Activated CD8-positive, alpha-beta memory T cell treated with anti-CD3 and anti-CD28 coated beads, Interleukin-2, amount 10 ng/mL, durations not matched to agents 7 days and 5 days (primary cell): ENCODE measurements at regions of chr19 and their contacts with region 1.

Region 1: DNA sequence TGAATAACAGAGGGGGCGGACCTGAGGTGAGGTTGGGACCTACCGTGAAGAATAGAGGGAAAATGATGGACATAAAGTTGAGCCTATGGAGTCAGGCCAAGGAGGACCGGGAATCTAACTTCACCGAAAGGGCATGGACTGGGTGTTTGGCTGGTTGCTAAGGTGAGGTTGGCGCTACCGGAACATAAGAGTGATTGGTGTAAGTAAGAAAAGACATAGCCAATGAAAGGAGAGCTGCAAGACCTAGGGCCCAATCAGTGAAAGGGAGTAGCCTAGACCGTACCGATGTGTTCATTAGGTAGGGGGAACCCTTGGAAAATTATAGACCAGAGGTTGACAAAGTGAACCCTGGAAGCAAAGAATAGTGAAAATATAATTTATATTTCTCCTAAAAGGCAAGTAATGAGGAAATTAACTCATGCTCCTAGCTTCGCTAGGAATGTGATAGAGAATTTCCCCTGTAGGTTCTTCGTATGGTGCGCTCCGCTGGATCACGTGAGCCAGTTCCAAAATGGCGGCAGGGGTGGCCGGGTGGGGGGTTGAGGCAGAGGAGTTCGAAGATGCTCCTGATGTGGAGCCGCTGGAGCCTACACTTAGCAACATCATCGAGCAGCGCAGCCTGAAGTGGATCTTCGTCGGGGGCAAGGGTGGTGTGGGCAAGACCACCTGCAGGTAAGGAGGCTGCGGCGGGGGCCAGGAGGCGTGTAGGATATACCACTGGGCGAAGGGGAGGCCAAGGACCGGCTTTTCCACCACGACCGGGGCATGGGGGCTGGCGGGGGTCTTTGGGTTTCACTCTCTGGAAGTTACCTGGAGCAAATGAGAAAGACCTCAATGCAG is at the start of gene GET3:
- DNase-seq: peak; percentile 88
- ATAC-seq: peak; percentile 86
- H3K4me3 Mint-ChIP-seq: peak within 1 kb of the TSS; percentile 99
- H3K27ac Mint-ChIP-seq: peak within 1 kb of the TSS; percentile 94
- H3K4me1 Mint-ChIP-seq: peaks cover 43% of the 10 kb centered on the region
- H3K27me3 Mint-ChIP-seq: no peaks in the 10 kb centered on the region
- total RNA-seq, gene GET3: 68.6 to 84.1 TPM

Region 2: DNA sequence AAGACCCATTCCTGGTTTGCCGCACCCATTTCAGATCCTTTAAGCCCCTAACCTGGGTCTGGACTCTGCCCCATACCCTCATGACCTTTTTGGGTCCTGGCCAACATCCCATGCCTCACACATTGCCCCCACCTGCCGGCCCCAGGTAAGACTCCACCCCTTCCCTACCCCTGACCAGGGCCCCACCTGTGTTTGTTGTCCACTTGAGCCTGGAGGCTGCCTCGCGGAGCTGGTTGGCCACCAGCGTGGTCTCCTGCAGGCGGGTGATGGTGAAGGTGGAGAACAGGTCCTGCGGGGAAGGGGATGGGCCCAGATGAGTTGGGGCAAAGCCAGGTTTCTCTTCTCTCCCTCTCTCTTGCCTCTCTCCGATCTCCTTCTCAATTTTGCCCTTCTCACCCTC is 90.2 kb before region 1 on chr19:
- CTCF ChIA-PET with region 1: no interaction called
- DNase-seq: no peak
- ATAC-seq: no peak
- H3K4me3 Mint-ChIP-seq: no peak overlapping the region
- H3K27ac Mint-ChIP-seq: no peak overlapping the region
- H3K4me1 Mint-ChIP-seq: peaks cover 2% of the 10 kb centered on the region
- H3K27me3 Mint-ChIP-seq: no peaks in the 10 kb centered on the region

Region 3: GRCh38 chr19:12696366-12697335 is 40.6 kb before region 1 on chr19 and contains the start of gene FBXW9:
- CTCF ChIA-PET with region 1: interaction called, 15 read pairs
- DNase-seq: peak; percentile 99
- ATAC-seq: peak; percentile 90
- H3K4me3 Mint-ChIP-seq: peak within 1 kb of the TSS; percentile 83
- H3K27ac Mint-ChIP-seq: peak within 1 kb of the TSS; percentile 98
- H3K4me1 Mint-ChIP-seq: peaks cover 26% of the 10 kb centered on the region
- H3K27me3 Mint-ChIP-seq: no peaks in the 10 kb centered on the region
- total RNA-seq, gene FBXW9: 5.2 to 6.3 TPM

Region 4: GRCh38 chr19:12716861-12717260 is 20.4 kb before region 1 on chr19:
- CTCF ChIA-PET with region 1: interaction called, 58 read pairs
- DNase-seq: peak; percentile 60
- ATAC-seq: peak; percentile 60
- H3K4me3 Mint-ChIP-seq: no peak overlapping the region
- H3K27ac Mint-ChIP-seq: no peak overlapping the region
- H3K4me1 Mint-ChIP-seq: peaks cover 28% of the 10 kb centered on the region
- H3K27me3 Mint-ChIP-seq: no peaks in the 10 kb centered on the region

Region 5: DNA sequence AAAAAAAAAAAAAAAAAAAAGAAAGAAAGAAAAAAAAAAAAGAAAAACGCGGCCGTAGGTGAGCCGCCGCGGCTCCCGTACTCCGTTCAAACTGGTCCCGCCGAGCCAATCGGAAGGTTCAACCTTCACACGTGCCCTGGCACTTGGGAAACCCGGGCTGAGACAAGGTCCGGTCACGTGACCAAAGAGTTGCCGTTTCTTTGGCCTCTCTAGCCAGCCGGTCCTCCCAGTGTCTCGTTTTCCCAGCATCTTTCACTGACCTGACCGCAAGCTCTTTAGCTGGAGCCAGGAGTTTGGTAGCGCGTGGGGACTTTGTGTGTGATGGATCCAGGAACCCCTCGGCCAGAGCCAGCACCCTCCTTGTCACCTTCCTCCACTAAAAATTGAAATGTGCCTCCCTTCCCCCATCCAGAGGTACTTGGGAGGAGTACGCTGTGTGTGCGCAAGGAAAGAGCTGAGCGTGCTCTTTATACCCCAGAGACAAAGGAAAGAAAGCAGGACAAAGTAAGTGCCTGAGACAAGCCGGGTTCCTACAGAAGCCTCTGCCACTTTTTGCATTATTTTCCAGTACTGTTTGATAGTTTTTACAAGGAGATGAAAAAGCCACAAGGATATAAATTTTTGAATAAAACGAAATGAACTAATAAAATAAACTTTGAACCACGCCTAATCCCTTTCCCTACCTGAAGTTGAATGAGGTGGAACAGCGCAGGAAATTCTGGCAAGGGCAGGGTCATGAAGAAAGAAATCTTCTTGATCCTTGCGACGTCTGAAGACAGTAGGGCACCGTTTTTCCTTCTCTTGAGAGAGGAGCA is 14.4 kb before region 1 on chr19:
- CTCF ChIA-PET with region 1: interaction called, 58 read pairs
- DNase-seq: peak; percentile 98
- ATAC-seq: peak; percentile 88
- H3K4me3 Mint-ChIP-seq: peak overlapping the region; percentile 83
- H3K27ac Mint-ChIP-seq: peak overlapping the region; percentile 91
- H3K4me1 Mint-ChIP-seq: peaks cover 38% of the 10 kb centered on the region
- H3K27me3 Mint-ChIP-seq: no peaks in the 10 kb centered on the region

Region 6: GRCh38 chr19:12757544-12758274 is 20.5 kb after region 1 on chr19:
- CTCF ChIA-PET with region 1: interaction called, 25 read pairs
- DNase-seq: peak; percentile 70
- ATAC-seq: peak; percentile 80
- H3K4me3 Mint-ChIP-seq: peak overlapping the region; percentile 23
- H3K27ac Mint-ChIP-seq: no peak overlapping the region
- H3K4me1 Mint-ChIP-seq: peaks cover 5% of the 10 kb centered on the region
- H3K27me3 Mint-ChIP-seq: peaks cover 15% of the 10 kb centered on the region

Region 7: DNA sequence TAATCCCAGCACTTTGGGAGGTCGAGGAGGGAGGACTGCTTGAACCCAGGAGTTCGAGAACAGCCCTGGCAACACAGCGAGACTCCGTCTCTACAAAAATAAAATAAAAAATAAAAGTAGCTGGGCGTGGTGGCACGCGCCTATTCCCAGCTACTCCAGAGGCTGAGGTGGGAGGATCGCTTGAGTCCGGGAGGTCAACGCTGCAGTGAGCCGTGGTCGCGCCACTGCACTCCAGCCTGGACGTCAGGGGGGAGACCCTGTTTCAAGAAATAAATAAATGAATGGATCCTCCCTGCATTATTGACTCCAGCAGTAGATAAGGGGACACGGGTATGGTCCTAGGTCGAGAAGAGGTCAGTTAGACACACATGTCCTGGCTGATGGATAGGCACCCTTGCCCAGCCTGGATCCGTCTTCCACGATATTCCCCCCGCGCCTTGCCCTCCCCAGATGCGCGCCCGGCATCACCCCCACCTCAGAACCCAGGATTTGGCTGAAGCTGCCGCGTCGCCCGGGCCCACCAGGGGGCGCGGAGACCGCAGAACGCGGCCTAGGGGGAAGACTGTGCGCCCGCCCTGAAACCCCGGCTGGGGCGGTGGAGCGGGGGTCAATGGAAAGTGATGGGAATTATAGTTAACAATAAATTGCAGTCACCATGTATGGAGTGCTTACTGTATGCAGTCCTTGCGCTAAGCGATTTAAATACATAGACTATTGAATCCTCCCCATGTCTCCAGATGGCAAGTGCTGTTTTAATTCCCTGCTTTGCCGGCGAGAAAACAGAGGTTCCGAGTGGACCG is 40.2 kb after region 1 on chr19:
- CTCF ChIA-PET with region 1: interaction called, 11 read pairs
- DNase-seq: peak; percentile 87
- ATAC-seq: peak; percentile 41
- H3K4me3 Mint-ChIP-seq: peak overlapping the region; percentile 76
- H3K27ac Mint-ChIP-seq: peak overlapping the region; percentile 97
- H3K4me1 Mint-ChIP-seq: peaks cover 37% of the 10 kb centered on the region
- H3K27me3 Mint-ChIP-seq: no peaks in the 10 kb centered on the region